Caco-2 (cell line): ENCODE measurements at regions of chr7 and their contacts with region 1.

Region 1: GRCh38 chr7:155815332-155816191 is 3.3 kb upstream of the SHH start:
- DNase-seq: peak; percentile 76 to 89
- H3K4me3 ChIP-seq: no peak overlapping the region
- H3K4me3 Mint-ChIP-seq: peak overlapping the region; percentile 16
- H3K27ac Mint-ChIP-seq: no peak overlapping the region
- H3K4me1 ChIP-seq: peaks cover 13% of the 10 kb centered on the region; the same call in 1 of the 2 replicates
- H3K4me1 Mint-ChIP-seq: peaks cover 21% of the 10 kb centered on the region
- H3K27me3 ChIP-seq: peaks cover 3% of the 10 kb centered on the region
- H3K27me3 Mint-ChIP-seq: peaks cover 19% of the 10 kb centered on the region
- CTCF ChIP-seq: peak; percentile 86 to 97

Region 2: GRCh38 chr7:155878674-155879073 is 63.1 kb after region 1 on chr7:
- CTCF ChIA-PET with region 1: no interaction called
- POLR2A ChIA-PET with region 1: no interaction called
- intact Hi-C with region 1: loop called (anchors 1 kb)
- DNase-seq: no peak
- H3K4me3 ChIP-seq: no peak overlapping the region
- H3K4me3 Mint-ChIP-seq: no peak overlapping the region
- H3K27ac Mint-ChIP-seq: no peak overlapping the region
- H3K4me1 ChIP-seq: no peaks in the 10 kb centered on the region
- H3K4me1 Mint-ChIP-seq: no peaks in the 10 kb centered on the region
- H3K27me3 ChIP-seq: no peaks in the 10 kb centered on the region
- H3K27me3 Mint-ChIP-seq: peaks cover 10% of the 10 kb centered on the region
- CTCF ChIP-seq: no peak

Region 3: DNA sequence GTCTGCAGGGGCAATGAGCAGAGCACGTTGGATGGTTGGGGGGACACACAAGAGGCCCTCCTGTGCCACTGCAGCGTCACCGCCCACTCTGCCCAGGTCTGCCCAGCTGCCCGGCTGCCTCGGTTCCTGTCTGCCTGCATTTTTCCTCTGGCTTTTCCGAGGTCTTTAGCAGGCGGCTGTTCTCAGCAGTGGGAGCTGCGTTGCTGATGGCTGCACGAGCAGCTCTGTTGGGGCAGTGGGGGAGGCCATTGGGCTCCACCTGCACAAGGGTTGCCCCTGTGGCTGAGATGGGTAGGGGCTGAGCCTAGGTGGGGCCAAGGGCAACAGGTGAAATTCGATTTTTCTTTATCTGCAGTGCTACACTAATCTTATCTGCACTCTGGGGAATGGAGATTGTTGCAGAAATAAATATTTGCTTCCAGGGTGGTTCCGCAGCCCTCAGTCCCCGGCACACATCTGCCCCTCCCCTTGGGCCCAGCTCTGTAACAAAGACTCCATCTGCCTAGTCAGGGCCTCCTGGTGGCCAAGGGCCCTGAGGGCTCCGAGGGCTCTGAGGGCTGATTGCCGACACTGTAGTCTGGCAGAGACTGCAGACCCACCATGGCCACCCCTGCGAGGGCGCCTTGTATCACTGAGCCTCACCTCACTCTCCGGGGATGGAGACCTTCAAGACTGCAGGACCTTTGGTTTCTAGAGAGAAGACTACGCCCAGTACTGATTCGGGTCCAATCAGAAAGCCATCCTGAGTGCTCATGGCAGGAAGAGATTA is 138.4 kb after region 1 on chr7:
- CTCF ChIA-PET with region 1: no interaction called
- POLR2A ChIA-PET with region 1: no interaction called
- intact Hi-C with region 1: loop called (anchors 1 kb)
- DNase-seq: peak; percentile 73 to 76
- H3K4me3 ChIP-seq: no peak overlapping the region
- H3K4me3 Mint-ChIP-seq: no peak overlapping the region
- H3K27ac Mint-ChIP-seq: peak overlapping the region; percentile 61
- H3K4me1 ChIP-seq: peaks cover 13% of the 10 kb centered on the region
- H3K4me1 Mint-ChIP-seq: peaks cover 21% of the 10 kb centered on the region
- H3K27me3 ChIP-seq: no peaks in the 10 kb centered on the region
- H3K27me3 Mint-ChIP-seq: no peaks in the 10 kb centered on the region
- CTCF ChIP-seq: peak in 1 of 2 experiments; percentile 45

Region 4: DNA sequence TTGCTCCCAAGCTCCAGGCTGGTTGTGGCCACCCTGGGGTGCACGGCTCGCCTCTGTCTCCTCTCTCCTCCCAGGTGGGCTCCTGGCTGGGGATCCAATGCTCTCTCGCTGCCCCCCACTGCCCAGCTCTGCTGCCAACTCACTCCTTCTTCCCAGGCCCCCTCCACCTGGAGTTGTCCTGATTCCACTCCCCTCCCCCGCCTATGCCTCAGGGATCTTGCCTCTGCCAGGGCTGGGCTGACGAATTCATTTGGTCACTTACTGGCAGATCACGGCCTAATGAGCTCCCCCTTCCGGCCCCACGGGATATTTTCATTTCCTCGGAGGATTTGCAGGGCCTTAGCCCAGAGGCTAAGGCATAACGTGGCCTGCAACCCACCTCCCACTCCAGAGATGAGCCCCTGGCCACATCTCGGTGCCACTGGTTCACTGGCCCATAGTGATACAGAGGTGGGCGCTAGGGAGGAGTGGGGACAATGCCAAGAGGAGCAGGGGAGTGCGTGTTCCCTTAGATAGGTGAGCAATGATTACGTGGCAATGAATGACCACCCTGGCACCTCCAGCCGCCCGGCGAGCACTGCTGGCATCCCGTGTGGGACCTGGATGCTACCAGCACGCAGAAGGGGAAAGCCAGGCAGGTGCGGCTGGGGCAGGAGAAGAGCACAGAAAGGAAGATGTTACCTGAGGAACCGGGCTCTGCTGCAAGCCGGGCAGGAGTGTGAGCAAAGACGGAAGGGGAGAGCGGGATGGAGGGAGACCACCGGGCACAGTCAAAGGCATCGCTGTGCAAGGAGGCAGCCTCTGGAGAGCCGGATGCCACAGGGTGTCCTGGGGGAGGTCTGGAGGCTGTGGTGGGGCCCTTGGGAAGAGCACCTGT is 341.4 kb after region 1 on chr7:
- CTCF ChIA-PET with region 1: no interaction called
- POLR2A ChIA-PET with region 1: no interaction called
- intact Hi-C with region 1: loop called (anchors 5 kb)
- DNase-seq: peak; percentile 42 to 57
- H3K4me3 ChIP-seq: no peak overlapping the region
- H3K4me3 Mint-ChIP-seq: no peak overlapping the region
- H3K27ac Mint-ChIP-seq: no peak overlapping the region
- H3K4me1 ChIP-seq: no peaks in the 10 kb centered on the region; the same call in 1 of the 2 replicates
- H3K4me1 Mint-ChIP-seq: peaks cover 6% of the 10 kb centered on the region
- H3K27me3 ChIP-seq: no peaks in the 10 kb centered on the region
- H3K27me3 Mint-ChIP-seq: no peaks in the 10 kb centered on the region
- CTCF ChIP-seq: peak in 1 of 2 experiments; percentile 36

Region 5: GRCh38 chr7:156473476-156474240 is 658.1 kb after region 1 on chr7:
- CTCF ChIA-PET with region 1: no interaction called
- POLR2A ChIA-PET with region 1: no interaction called
- intact Hi-C with region 1: loop called (anchors 1 kb)
- DNase-seq: peak in 1 of 2 experiments; percentile 55
- H3K4me3 ChIP-seq: no peak overlapping the region
- H3K4me3 Mint-ChIP-seq: no peak overlapping the region
- H3K27ac Mint-ChIP-seq: no peak overlapping the region
- H3K4me1 ChIP-seq: peaks cover 3% of the 10 kb centered on the region; the same call in 1 of the 2 replicates
- H3K4me1 Mint-ChIP-seq: no peaks in the 10 kb centered on the region
- H3K27me3 ChIP-seq: no peaks in the 10 kb centered on the region
- H3K27me3 Mint-ChIP-seq: no peaks in the 10 kb centered on the region
- CTCF ChIP-seq: peak; percentile 83 to 88